Activated CD8-positive, alpha-beta T cell treated with anti-CD3 and anti-CD28 coated beads, Interleukin-2, amount 10 ng/mL, durations not matched to agents 7 days and 5 days (primary cell): ENCODE measurements at regions of chr3 and their contacts with region 1.

Region 1: GRCh38 chr3:56825567-56826438 is 24.1 kb upstream of the ARHGEF3 start:
- DNase-seq: no peak
- ATAC-seq: no peak
- H3K4me3 Mint-ChIP-seq: no peak overlapping the region
- H3K27ac Mint-ChIP-seq: no peak overlapping the region
- H3K4me1 Mint-ChIP-seq: peaks cover 47% of the 10 kb centered on the region
- H3K27me3 Mint-ChIP-seq: no peaks in the 10 kb centered on the region

Region 2: DNA sequence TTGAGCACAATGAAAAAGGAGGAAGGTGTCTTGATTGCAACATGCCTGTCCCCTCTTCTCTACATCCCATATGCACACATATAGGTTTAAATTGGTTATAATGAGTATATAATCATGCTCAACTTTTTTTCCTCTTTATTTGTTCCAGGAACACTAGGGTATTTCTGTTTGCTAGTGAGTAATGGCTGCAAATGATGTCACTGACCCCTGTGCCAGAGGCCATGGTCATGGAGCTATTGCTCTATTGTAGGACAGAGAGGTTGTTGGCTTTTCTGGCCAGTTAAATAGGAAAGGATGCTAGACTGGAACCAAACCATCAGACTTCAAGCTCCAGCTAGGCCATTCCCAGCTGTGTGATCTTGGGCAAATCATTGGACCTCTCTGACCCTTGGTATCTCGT is 33.6 kb before region 1 on chr3:
- CTCF ChIA-PET with region 1: no interaction called
- POLR2A ChIA-PET with region 1: no interaction called
- DNase-seq: no peak
- ATAC-seq: no peak
- H3K4me3 Mint-ChIP-seq: no peak overlapping the region
- H3K27ac Mint-ChIP-seq: peak overlapping the region; percentile 91
- H3K4me1 Mint-ChIP-seq: peaks cover 90% of the 10 kb centered on the region
- H3K27me3 Mint-ChIP-seq: no peaks in the 10 kb centered on the region

Region 3: GRCh38 chr3:56812754-56813650 is 12.8 kb before region 1 on chr3:
- CTCF ChIA-PET with region 1: interaction called, 24 read pairs
- POLR2A ChIA-PET with region 1: interaction called, 3 read pairs
- DNase-seq: no peak
- ATAC-seq: no peak
- H3K4me3 Mint-ChIP-seq: peak overlapping the region; percentile 2
- H3K27ac Mint-ChIP-seq: peak overlapping the region; percentile 40
- H3K4me1 Mint-ChIP-seq: peaks cover 48% of the 10 kb centered on the region
- H3K27me3 Mint-ChIP-seq: no peaks in the 10 kb centered on the region

Region 4: DNA sequence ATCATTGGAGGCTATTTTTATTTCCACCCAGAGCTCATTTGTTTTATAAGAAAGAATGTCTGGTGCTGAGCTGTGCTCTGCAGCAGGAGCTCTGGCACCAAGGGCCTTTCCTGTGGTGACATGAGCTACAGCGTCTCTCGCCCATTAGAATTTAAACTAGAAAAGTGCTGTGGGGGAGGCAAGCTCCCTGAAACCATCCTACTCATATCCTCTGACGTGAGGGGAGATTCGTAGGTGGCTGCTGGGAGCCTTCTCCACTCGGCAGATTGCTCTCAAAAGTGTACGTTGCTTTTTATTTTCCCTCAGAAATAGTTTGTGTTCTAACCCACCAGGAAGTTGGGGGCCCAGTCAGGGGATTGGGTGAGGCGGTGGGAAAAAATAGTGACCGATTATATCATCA is 52.3 kb after region 1 on chr3:
- CTCF ChIA-PET with region 1: no interaction called
- POLR2A ChIA-PET with region 1: no interaction called
- DNase-seq: peak; percentile 65
- ATAC-seq: peak; percentile 81
- H3K4me3 Mint-ChIP-seq: peak overlapping the region; percentile 63
- H3K27ac Mint-ChIP-seq: peak overlapping the region; percentile 91
- H3K4me1 Mint-ChIP-seq: peaks cover 67% of the 10 kb centered on the region
- H3K27me3 Mint-ChIP-seq: no peaks in the 10 kb centered on the region